Activated CD8-positive, alpha-beta T cell treated with anti-CD3 and anti-CD28 coated beads, Interleukin-2, amount 10 ng/mL, durations not matched to agents 7 days and 5 days (primary cell): ENCODE measurements at regions of chr9 and their contacts with region 1.

Region 1: DNA sequence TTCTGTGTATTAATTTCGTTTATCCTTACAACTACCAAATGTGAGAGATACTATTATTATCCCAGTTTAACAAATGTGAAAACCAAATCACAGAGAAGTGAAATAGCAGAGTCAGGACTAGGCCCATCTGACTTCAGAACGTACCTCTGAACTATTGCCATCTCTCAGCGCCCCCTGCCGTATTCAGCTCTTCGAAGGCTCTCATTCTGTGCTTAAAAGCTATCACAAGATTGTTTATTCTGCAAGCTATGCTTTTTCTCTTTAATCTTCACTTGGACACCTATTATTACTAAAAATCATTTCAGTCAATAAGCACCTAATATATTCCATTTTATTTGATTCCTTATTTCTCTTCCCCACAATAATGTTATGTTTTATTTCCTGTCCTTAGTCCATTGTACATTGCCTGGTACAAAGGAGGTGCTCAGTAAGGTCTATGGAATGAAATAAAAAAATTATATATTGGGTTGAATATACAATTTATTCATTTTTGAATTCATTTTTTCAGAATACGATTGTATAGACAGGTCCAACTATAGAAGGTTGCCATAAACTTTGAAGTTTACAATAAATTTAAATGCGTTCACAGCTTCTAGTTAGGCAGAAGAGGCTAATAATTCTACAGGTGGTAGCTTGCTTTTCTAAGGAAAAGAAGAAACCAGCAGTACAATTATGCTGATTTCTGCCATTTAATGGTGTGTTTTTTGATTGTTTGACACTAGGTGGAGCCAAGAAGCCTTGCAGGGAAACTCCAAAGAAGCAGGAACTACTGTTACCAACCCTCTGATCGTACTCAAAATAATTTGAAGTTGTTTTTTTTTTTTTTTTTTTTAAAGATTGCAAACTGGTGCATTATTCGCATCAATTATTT is 202.2 kb upstream of the DMRTA1 start:
- DNase-seq: peak; percentile 57
- ATAC-seq: peak; percentile 57
- H3K4me3 Mint-ChIP-seq: no peak overlapping the region
- H3K27ac Mint-ChIP-seq: no peak overlapping the region
- H3K4me1 Mint-ChIP-seq: peaks cover 22% of the 10 kb centered on the region
- H3K27me3 Mint-ChIP-seq: peaks cover 28% of the 10 kb centered on the region

Region 2: DNA sequence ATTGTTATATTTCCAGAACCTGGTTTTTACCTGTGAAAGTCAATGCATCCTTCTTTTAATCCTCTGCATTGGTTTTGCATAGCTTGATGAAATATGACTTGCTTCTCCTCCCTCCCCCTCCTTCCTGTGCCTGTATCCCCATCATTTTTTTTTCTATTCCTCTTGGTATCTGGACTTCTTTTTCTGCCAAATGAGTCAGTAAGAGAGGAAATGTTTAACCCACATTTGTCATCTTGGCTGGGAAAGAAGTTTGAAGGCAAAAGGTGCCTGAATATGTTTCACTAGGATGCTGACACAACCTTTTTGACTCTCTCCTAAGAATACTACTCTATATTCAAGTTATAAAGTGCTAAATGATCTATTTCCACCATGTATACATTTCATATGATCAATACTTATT is 199.8 kb before region 1 on chr9:
- CTCF ChIA-PET with region 1: interaction called, 19 read pairs
- POLR2A ChIA-PET with region 1: no interaction called
- DNase-seq: no peak
- ATAC-seq: no peak
- H3K4me3 Mint-ChIP-seq: no peak overlapping the region
- H3K27ac Mint-ChIP-seq: no peak overlapping the region
- H3K4me1 Mint-ChIP-seq: peaks cover 72% of the 10 kb centered on the region
- H3K27me3 Mint-ChIP-seq: peaks cover 21% of the 10 kb centered on the region

Region 3: DNA sequence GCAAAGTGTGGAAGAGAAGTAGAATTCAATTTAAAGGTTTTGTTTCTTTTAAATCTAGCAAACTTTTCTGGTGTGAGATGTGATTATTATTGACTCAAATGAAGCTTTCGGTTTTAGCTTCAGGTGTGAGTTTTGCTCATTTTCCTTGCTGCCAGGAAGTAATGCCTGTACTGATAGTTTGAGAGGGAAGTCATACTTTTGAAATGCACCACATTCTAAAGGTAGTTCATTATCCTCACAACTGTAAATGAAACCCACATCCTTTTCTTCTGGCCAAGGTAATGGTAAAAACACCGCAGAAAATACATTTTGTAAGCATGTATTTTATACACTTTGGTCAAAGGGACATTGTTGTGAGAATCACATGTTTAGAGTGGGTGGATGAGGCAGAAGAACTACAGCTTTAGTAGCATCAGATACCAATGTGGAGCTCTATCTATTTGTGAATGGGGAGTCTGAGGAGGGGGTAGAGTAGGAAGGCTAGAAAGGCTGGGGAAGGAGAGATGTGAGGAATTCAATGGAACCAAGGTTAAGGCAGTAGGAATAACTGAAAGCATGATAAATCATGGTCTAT is 68.3 kb before region 1 on chr9:
- CTCF ChIA-PET with region 1: interaction called, 10 read pairs
- POLR2A ChIA-PET with region 1: no interaction called
- DNase-seq: peak; percentile 26
- ATAC-seq: peak; percentile 77
- H3K4me3 Mint-ChIP-seq: peak overlapping the region; percentile 9
- H3K27ac Mint-ChIP-seq: peak overlapping the region; percentile 72
- H3K4me1 Mint-ChIP-seq: peaks cover 21% of the 10 kb centered on the region
- H3K27me3 Mint-ChIP-seq: peaks cover 22% of the 10 kb centered on the region

Region 4: GRCh38 chr9:22332202-22332601 is 87.8 kb after region 1 on chr9:
- CTCF ChIA-PET with region 1: no interaction called
- POLR2A ChIA-PET with region 1: no interaction called
- DNase-seq: no peak
- ATAC-seq: no peak
- H3K4me3 Mint-ChIP-seq: no peak overlapping the region
- H3K27ac Mint-ChIP-seq: no peak overlapping the region
- H3K4me1 Mint-ChIP-seq: no peaks in the 10 kb centered on the region
- H3K27me3 Mint-ChIP-seq: no peaks in the 10 kb centered on the region

Region 5: DNA sequence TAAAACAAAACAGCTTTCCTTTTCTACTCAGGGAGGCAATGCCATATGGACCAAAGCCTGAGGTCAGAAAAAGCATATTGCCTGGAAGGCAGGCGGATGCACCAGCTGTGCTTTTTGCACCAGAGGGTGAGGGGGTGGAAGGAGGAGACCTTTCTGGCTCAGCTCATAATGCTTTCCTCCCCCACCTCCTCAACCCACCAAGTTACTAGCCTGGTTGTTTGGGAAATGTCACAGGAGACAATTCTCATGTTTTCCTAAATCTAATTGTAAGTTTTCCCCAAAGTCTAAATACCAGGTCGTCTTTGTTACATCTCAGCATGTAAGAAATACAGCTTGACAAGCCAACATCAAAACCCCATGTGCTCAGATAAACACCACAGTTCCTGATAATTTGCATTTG is 129.7 kb after region 1 on chr9:
- CTCF ChIA-PET with region 1: no interaction called
- POLR2A ChIA-PET with region 1: no interaction called
- DNase-seq: no peak
- ATAC-seq: no peak
- H3K4me3 Mint-ChIP-seq: no peak overlapping the region
- H3K27ac Mint-ChIP-seq: no peak overlapping the region
- H3K4me1 Mint-ChIP-seq: no peaks in the 10 kb centered on the region
- H3K27me3 Mint-ChIP-seq: no peaks in the 10 kb centered on the region

Region 6: DNA sequence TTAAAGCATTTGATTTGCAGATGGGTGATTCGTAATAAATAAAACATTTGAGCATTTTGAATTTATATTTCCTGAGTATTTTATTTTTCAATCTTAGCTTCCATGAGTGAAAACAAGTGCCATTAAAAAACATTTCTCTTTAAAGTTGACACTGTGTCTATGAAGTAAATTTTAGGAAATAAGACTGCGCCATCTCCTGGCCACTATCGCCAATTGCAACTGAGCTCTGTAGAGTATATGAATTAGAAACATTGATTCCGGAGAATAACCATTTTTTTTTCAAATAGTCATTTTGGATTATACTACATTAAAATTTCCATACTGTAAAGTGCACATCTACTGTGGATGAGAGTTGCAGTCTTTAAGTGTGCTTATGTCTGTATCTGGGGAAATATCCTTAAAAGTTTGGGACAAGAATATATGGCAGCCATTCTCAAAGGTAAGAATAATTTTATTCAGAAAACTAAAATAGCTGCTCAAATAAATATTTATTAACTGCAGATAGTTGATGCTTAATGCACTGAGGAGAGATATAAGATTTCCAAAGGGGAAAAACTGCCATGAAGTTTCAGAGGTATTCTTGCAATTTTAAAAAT is 208.1 kb after region 1 on chr9:
- CTCF ChIA-PET with region 1: interaction called, 22 read pairs
- POLR2A ChIA-PET with region 1: no interaction called
- DNase-seq: peak; percentile 61
- ATAC-seq: no peak
- H3K4me3 Mint-ChIP-seq: no peak overlapping the region
- H3K27ac Mint-ChIP-seq: no peak overlapping the region
- H3K4me1 Mint-ChIP-seq: peaks cover 2% of the 10 kb centered on the region
- H3K27me3 Mint-ChIP-seq: peaks cover 27% of the 10 kb centered on the region